ENCODE measurements at regions of chr6 and their contacts with region 1.

Region 1: DNA sequence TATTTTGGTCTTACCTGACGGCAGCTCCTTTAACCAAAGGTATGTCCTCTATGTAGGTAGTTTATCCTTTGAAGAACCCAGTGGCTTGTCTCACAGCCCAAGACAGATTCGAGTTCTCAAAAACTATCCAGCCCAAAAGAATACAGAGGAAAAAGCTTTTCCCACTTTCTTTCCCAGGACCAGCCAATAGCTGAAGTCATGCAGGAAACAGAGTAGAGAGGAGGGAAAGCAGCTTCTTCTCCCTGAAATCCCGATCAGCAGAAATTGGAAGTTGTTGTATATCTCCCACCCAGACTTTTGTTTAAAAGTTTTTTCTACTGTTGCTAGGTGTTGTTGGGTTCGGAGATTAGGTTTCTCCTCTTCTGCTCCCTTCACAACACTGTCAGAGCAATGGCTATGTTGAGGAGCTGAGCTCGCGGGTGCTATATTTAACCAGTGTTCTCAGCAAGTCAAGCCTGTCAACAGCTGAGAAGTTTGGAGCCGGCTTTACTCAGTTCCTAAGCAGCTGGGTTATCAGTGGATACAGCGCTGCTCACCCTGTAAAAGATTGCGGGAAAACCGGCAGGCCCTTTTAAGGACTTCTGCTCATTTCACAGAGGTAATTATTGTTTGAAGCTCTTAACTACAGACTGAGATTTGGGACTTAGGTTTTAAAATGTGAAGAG is at the start of gene FILIP1:
- DNase-seq: peak; percentile 87
- H3K4me3 ChIP-seq: peak within 1 kb of the TSS; percentile 46 to 63 (median 52)
- H3K27ac ChIP-seq: peak within 1 kb of the TSS; percentile 82 to 93 (median 86)
- H3K4me1 ChIP-seq: peaks cover 0 to 38% (median 17%) of the 10 kb centered on the region in 4 donors
- H3K27me3 ChIP-seq: no peaks in the 10 kb centered on the region
- CTCF ChIP-seq: no peak
- EP300 ChIP-seq: no peak
- POLR2A ChIP-seq: peak; percentile 70 to 84
- total RNA-seq, gene FILIP1: 47.1 to 72.8 (median 53.8) TPM

Region 2: GRCh38 chr6:73653571-73654424 is 1839.7 kb before region 1 on chr6 and contains the start of gene SLC17A5:
- intact Hi-C with region 1: loop called (anchors 10 kb)
- DNase-seq: peak; percentile 97
- H3K4me3 ChIP-seq: peak within 1 kb of the TSS; percentile 84 to 98 (median 92)
- H3K27ac ChIP-seq: peak within 1 kb of the TSS; percentile 94 to 99 (median 96)
- H3K4me1 ChIP-seq: peaks cover 0 to 21% (median 15%) of the 10 kb centered on the region in 4 donors
- H3K27me3 ChIP-seq: no peaks in the 10 kb centered on the region
- CTCF ChIP-seq: peak in 1 of 4 experiments; percentile 9
- EP300 ChIP-seq: no peak
- POLR2A ChIP-seq: peak; percentile 34 to 52
- total RNA-seq, gene SLC17A5: 12.2 to 18.2 (median 14.8) TPM

Region 3: DNA sequence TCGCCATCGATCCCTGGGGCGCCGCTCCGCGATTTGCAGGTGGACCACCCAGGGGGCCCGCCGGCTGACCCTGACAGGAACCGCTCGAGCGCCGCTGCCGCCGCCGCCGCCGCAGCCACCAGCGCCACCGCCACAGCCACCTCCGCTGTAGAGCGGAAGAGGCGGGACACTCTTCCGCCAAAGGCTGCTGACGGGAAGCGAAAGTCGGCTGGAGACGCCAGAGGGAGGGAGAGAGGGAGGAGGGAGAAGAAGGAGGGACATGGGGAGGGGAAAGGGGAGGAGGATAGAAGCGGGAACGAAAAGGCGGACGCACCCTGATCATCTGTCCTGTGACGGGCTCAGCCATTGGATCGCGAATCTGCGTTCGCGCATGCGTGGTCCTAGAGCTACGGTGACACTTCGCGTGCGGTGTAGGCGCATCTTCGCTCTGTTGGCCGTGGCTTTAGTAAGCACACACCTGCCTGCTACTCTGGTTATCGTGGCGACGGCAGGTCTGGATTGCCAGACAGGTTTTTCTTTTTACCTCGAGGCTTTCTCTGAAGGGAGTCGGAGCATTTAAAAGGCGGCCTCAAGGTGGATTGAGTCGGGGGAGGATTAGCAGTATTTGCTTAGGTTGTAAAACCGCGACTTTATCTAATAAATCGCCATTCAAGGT is 208.8 kb before region 1 on chr6 and contains the start of gene TMEM30A:
- intact Hi-C with region 1: loop called (anchors 5 kb)
- DNase-seq: peak; percentile 99
- H3K4me3 ChIP-seq: peak within 1 kb of the TSS; percentile 74 to 98 (median 90)
- H3K27ac ChIP-seq: peak within 1 kb of the TSS; percentile 92 to 93 (median 92)
- H3K4me1 ChIP-seq: peaks cover 0 to 57% (median 38%) of the 10 kb centered on the region in 4 donors
- H3K27me3 ChIP-seq: no peaks in the 10 kb centered on the region
- CTCF ChIP-seq: no peak
- EP300 ChIP-seq: peak in 1 of 4 donors; percentile 57
- POLR2A ChIP-seq: peak; percentile 69 to 79
- total RNA-seq, gene TMEM30A: 69.5 to 95.6 (median 92.6) TPM

Region 4: GRCh38 chr6:75437421-75437891 is 56.1 kb before region 1 on chr6:
- intact Hi-C with region 1: loop called (anchors 5 kb)
- DNase-seq: no peak
- H3K4me3 ChIP-seq: no peak overlapping the region
- H3K27ac ChIP-seq: peak overlapping the region; percentile 75 to 84 (median 81)
- H3K4me1 ChIP-seq: peaks cover 0 to 42% (median 33%) of the 10 kb centered on the region in 4 donors
- H3K27me3 ChIP-seq: no peaks in the 10 kb centered on the region
- CTCF ChIP-seq: no peak
- EP300 ChIP-seq: peak in 2 of 4 donors; percentile 16 to 31
- POLR2A ChIP-seq: no peak